Dorsolateral prefrontal cortex (tissue), 120 donors: ENCODE measurements at regions of chr4 and their contacts with region 1.

Region 1: GRCh38 chr4:88533937-88534750 is 10.6 kb upstream of the PYURF start:
- DNase-seq: no peak
- H3K4me3 ChIP-seq: no peak overlapping the region
- H3K27ac ChIP-seq: no peak overlapping the region
- H3K27me3 ChIP-seq: no peaks in the 10 kb centered on the region
- CTCF ChIP-seq: no peak

Region 2: DNA sequence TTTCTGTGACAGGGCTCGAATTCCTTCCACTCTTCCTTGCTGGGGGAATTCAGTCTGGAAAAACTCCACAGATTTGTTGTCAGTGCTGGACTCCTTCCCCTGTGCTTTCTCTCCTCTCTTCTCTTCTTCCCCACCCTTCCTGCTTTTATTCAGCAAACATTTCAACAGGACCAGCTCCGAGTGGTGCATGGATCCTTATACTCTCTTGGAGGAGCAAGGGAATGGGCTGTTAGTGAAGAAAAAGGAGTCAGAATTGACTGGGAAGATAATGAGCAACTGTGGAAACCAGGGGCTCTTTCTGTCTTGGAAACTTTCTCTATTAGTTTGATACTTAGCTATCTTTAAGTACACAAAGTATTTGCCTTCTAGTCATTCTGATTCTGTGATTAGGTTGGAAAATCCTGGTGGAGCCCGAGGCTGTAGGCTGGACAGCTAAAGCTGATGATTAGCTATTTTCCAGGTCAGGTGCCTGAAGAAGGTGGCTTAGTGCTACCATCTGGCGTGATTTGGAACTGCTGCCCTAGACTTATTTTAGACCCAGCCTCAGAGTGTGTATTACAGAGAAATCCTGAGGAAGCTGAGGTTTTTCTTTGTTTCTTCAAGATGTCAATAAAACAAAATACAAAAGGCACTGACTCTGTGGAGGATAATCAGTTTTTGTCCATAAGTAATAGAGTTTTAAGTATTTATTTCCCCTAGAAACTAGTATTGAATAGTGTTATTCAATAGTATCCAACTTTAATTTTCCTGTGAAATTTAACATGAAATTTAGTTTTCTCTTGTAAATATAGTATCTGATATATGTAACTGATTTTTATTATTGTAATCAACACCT is 125.1 kb after region 1 on chr4:
- intact Hi-C with region 1: loop called (anchors 5 to 10 kb)
- DNase-seq: peak in 4 of 10 donors; percentile 38 to 69 (median 54)
- H3K4me3 ChIP-seq: no peak overlapping the region
- H3K27ac ChIP-seq: peak overlapping the region in 15 of 59 donors; percentile 0 to 69 (median 32)
- H3K27me3 ChIP-seq: no peaks in the 10 kb centered on the region
- CTCF ChIP-seq: peak; percentile 21 to 73 (median 61)

Region 3: GRCh38 chr4:89024051-89024675 is 490.0 kb after region 1 on chr4:
- intact Hi-C with region 1: loop called in 1 of 2 experiments (anchors 5 kb)
- DNase-seq: peak in 3 of 10 donors; percentile 25 to 63 (median 53)
- H3K4me3 ChIP-seq: peak overlapping the region in 1 of 59 donors; percentile 5
- H3K27ac ChIP-seq: no peak overlapping the region
- H3K27me3 ChIP-seq: no peaks in the 10 kb centered on the region
- CTCF ChIP-seq: peak; percentile 78 to 99 (median 92)